Mucosa of descending colon (tissue), 3 donors: ENCODE measurements at regions of chr16 and their contacts with region 1.

Region 1: GRCh38 chr16:48353565-48354163 is 31.5 kb downstream of the SIAH1 start:
- DNase-seq: peak in 2 of 3 donors; percentile 53 to 77
- ATAC-seq: peak; percentile 93
- H3K4me3 ChIP-seq: no peak overlapping the region
- H3K4me1 ChIP-seq: no peaks in the 10 kb centered on the region
- CTCF ChIP-seq: peak; percentile 53

Region 2: DNA sequence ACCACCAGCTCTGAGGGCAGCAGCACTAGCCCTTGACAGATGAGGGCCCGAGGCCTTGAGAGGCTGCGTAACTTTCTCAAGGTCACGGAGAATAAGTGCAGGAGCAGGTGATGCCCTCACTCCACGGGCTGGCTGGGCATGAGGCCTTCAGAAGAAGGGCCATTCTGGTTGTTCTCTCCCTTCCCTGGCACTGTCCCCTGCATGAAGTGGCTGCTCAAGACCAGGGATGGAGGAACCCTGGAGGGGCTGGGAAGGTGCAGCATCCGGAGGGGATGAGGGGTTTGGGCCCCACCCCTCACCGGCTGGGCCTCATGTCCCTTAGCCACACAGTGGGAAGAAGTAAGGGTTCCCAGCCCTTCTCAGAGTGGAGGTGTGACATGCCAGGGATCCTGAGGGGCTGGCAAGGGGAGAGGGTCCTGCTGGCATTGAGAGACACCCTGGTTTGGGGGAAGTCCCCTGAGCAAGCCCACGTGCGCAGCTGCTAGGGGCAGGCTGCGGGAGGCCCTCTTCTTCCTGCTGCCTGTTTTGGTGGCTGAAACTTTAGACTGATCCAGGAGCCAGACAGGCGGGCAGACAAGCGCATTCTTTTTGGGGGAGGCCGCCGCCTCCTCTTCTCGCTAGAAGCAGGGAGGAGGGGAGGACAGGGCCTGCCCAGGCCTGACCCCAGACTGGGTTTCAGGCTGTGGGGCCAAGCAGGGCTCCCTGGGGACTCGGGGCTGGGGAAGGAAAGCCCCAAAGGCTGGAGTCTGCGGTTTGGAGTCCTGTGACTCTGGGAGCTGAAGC is 182.4 kb after region 1 on chr16:
- intact Hi-C with region 1: loop called (anchors 5 to 10 kb)
- DNase-seq: peak in 2 of 3 donors; percentile 38 to 70
- ATAC-seq: peak; percentile 27
- H3K4me3 ChIP-seq: no peak overlapping the region
- H3K4me1 ChIP-seq: peaks cover 27% of the 10 kb centered on the region
- CTCF ChIP-seq: no peak

Region 3: DNA sequence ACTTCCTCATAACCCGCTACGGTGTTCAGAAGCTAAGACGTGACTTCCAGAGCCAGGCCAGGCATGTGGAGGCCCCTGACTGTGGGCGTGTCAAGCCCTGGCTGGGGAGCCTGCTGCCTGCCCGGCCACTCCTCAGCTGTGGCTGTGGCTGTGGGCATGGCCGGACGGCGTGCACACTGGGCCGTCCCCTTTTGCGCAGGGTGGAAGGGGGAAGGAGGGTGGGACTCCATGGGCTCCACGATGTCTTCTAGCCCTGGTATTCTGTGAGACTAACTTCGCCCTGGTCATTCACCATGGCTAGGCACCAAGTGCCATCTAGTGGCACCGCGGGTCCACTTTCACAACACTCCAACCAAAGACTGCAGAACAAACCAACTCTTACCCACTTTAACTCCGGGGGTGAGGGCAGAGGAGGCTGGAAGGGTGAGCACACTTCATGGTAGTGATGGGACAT is 188.4 kb after region 1 on chr16:
- intact Hi-C with region 1: loop called (anchors 5 to 10 kb)
- DNase-seq: peak in 2 of 3 donors; percentile 57 to 63
- ATAC-seq: peak; percentile 66
- H3K4me3 ChIP-seq: no peak overlapping the region
- H3K4me1 ChIP-seq: peaks cover 26% of the 10 kb centered on the region
- CTCF ChIP-seq: no peak

Region 4: DNA sequence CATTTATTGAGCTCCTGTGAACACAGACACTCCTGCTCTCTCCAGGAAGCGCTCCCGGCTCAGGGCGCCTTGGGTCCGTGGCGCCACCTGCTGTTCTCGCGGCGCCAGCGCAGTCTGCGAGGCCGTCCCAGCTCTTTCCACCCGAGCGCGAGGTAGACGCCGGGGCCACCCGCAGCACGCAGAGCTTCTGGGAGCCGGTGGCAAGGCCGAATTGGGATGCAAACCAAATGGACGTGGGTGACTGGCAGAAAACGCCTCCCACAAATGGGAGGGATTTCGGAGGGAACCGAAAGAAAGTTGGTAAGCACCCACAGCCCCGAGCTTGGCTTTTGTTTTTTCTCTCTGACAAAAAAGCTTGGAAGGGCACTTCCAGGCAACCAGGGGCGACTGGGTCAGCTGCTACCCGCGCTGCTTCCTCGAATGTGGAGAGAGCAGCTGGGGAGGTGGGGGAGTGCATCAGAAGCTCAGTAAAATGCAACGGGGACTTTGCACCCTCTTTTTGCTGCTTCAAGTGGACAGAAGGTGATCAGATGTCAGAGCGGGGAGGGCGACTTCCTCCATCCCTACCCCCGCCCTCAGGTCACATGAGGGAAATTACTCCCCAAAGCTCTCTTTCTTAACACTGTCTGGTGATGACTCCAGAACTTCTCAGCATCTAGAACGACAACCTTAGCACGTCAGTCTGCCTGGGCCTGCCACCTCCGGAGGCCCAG is 269.8 kb after region 1 on chr16:
- intact Hi-C with region 1: loop called (anchors 5 kb)
- DNase-seq: peak; percentile 86 to 94 (median 89)
- ATAC-seq: peak; percentile 99
- H3K4me3 ChIP-seq: no peak overlapping the region
- H3K4me1 ChIP-seq: peaks cover 10% of the 10 kb centered on the region
- CTCF ChIP-seq: peak; percentile 100

Region 5: GRCh38 chr16:48628359-48628985 is 274.8 kb after region 1 on chr16:
- intact Hi-C with region 1: loop called (anchors 5 kb)
- DNase-seq: no peak
- ATAC-seq: no peak
- H3K4me3 ChIP-seq: no peak overlapping the region
- H3K4me1 ChIP-seq: peaks cover 5% of the 10 kb centered on the region
- CTCF ChIP-seq: no peak